Activated naive CD4-positive, alpha-beta T cell treated with anti-CD3 and anti-CD28 coated beads, Interleukin-2, amount 10 ng/mL, durations not matched to agents 7 days and 5 days (primary cell): ENCODE measurements at regions of chr14 and their contacts with region 1.

Region 1: DNA sequence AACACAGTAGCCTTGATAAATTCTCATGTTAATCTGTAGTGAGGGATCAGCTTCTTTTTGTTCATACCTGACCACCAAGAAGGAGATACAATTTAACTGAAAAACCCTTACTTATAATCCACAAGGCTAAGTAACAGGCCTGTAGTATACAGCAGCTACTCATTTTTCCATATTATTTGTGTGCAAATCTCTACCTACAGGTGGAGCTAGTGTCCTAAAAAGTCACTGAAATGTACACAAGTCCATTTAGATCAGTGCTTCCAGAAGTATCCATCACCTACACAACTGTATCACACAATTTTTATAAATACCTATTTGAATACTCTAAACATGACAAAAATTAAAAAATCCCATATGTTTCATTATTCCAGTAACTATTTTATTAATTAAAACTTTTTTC is 173.2 kb downstream of the SLC35F4 start:
- DNase-seq: no peak
- H3K4me3 Mint-ChIP-seq: no peak overlapping the region
- H3K27ac Mint-ChIP-seq: no peak overlapping the region
- H3K4me1 Mint-ChIP-seq: no peaks in the 10 kb centered on the region
- H3K27me3 Mint-ChIP-seq: no peaks in the 10 kb centered on the region

Region 2: DNA sequence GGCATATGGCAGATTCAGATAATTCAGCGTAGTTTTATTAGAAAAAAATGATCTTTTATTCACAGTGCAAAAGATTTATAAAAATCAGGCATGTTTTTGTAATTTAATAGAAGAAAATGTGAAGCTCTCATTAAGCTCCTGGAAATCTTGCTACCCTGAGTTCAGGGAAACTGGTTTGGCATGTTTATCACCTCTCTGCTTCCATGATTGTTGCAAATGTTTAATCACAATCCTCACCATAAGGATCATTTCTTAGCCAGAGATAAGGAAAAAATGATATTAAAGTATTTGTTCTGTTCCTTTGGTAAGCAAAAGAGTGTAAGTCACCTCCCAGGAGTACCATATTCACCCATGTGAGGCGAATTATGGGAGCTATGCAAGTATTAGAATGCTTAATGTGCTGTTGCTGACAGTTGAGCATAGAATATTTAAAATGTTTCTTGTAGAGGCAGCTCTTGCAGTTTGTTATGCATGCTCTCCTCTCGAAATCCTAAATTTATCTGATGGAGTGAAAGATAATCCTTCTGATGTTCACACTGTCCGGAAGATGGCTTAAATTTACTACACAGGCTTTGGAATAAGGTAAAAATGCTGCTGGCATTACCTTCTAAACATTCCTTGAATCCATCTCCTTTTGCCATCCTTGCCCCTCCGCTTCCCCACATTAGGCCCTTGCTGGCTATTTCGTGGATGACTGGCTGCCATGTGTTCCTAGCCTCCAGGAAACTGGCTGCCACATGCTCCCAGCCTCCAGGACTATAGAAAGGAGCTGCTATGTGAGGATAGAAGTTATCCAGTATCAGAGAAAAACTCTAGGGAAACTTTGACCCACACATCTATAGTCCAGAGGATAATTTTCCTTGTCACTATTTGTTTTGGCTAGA is 83.2 kb before region 1 on chr14:
- CTCF ChIA-PET with region 1: no interaction called
- DNase-seq: no peak
- H3K4me3 Mint-ChIP-seq: no peak overlapping the region
- H3K27ac Mint-ChIP-seq: no peak overlapping the region
- H3K4me1 Mint-ChIP-seq: no peaks in the 10 kb centered on the region
- H3K27me3 Mint-ChIP-seq: no peaks in the 10 kb centered on the region

Region 3: DNA sequence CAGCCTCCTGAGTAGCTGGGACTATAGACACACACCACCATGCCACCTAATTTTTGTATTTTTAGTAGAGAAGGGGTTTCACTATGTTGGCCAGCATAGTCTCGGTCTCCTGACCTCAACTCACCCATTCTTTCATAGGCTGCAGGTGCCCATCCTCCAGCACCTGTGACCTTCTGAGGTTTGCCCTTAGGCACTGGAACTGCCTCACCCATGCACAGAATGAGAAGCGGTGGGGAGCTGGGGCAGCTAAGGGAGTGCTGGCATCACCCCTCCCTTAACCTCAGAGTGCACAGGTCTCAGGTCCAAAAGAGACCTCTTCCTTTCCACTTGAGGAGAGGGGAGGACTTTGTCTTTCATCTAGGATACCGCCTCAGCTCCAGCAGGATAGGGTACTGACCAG is 21.6 kb before region 1 on chr14:
- CTCF ChIA-PET with region 1: no interaction called
- DNase-seq: no peak
- H3K4me3 Mint-ChIP-seq: no peak overlapping the region
- H3K27ac Mint-ChIP-seq: no peak overlapping the region
- H3K4me1 Mint-ChIP-seq: no peaks in the 10 kb centered on the region
- H3K27me3 Mint-ChIP-seq: no peaks in the 10 kb centered on the region

Region 4: DNA sequence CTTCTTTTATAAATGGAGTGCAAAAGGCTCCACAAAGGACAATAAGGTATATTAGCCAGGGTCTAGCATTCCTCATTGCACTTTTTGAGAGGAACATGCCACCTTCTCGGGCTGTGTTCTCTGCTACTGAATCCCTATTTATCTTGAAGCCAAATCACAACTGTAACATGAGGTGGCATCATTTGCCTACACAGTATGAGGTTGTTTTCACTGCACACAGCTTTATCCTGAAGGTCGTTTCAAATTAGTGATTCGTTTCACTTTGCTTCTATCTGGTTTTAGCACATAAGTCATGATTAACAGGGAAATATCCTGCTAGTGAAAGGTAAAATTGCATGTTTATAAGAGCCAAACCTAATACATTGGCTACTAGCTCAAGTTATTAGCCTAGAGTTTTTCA is 19.4 kb after region 1 on chr14:
- CTCF ChIA-PET with region 1: no interaction called
- DNase-seq: no peak
- H3K4me3 Mint-ChIP-seq: no peak overlapping the region
- H3K27ac Mint-ChIP-seq: no peak overlapping the region
- H3K4me1 Mint-ChIP-seq: no peaks in the 10 kb centered on the region
- H3K27me3 Mint-ChIP-seq: no peaks in the 10 kb centered on the region

Region 5: GRCh38 chr14:58072288-58073071 is 379.8 kb after region 1 on chr14:
- CTCF ChIA-PET with region 1: interaction called, 13 read pairs
- DNase-seq: peak; percentile 63
- H3K4me3 Mint-ChIP-seq: no peak overlapping the region
- H3K27ac Mint-ChIP-seq: no peak overlapping the region
- H3K4me1 Mint-ChIP-seq: no peaks in the 10 kb centered on the region
- H3K27me3 Mint-ChIP-seq: peaks cover 12% of the 10 kb centered on the region